ENCODE measurements at regions of chrX and their contacts with region 1.

Region 1: DNA sequence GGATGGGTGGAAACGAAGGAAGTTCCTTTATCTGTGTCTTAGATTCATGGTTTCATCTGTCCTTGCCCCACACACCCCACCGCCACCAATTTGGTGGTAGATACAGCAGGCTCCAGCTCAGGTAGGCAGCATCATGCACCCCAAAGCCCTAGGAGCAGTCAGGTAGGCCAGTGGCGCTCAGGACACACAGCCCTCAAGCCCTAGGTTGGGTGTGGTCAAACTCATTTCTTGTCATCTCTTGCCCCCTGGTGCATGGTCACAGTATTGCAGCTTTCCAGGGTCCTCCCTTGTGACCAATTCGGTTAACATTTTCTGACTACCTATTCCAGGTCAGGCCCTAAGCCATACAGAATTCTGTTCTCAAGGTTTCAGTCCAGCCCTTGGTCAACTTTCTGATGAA is 14.5 kb upstream of the PRRG3 start:
- DNase-seq: peak; percentile 62
- ATAC-seq: no peak
- H3K4me3 Mint-ChIP-seq: no peak overlapping the region
- H3K27ac Mint-ChIP-seq: no peak overlapping the region
- H3K4me1 Mint-ChIP-seq: peaks cover 8% of the 10 kb centered on the region
- H3K27me3 Mint-ChIP-seq: peaks cover 2% of the 10 kb centered on the region

Region 2: DNA sequence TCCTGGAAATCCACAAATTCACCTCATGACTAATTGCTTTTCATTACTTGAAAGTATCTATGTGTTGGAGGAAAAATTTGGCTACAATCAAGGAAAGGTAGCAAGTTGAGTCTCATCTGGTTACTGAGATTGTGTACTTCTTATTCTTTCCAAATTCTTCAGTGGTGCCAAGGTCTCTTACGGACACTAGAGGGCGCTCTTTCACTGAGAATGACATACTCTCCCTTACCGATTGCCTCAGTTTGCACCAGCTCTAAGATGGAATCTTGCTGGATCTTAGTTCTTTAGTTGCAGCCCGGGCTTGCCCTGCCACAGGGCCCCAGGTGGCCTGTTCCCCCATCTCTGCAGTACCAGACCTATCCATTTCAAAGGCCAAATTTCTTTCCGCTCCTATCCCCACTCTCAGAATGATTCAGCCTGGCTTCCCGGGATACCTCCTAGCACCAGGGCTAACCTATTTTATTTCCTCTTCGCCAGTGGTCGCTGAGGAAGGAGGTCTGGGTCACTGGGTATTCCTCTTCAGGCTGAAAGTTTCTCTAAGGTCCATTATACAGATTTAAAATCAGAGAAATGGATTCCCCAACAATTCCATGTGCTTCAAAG is 529.0 kb before region 1 on chrX:
- CTCF ChIA-PET with region 1: interaction called, 14 read pairs
- POLR2A ChIA-PET with region 1: no interaction called
- DNase-seq: peak; percentile 41
- ATAC-seq: peak; percentile 55
- H3K4me3 Mint-ChIP-seq: no peak overlapping the region
- H3K27ac Mint-ChIP-seq: no peak overlapping the region
- H3K4me1 Mint-ChIP-seq: no peaks in the 10 kb centered on the region
- H3K27me3 Mint-ChIP-seq: peaks cover 14% of the 10 kb centered on the region

Region 3: DNA sequence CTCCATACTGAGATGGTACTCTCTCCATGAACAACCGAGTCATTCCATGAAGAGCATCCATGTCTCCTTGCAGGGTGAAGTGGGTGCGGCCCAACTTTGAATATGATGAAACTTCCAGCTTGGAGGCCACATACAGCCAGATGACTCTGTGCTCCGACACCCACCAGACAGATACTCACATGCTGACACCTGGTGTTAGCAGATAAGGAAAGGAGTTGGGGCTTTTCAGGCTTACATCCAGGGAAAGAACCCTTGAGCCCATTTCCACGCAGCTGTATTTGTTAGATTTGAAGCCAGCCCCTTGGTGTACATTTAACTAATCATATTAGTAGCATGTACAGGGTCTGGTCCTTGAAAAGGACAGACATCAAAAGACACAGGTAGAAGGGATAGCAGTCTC is 47.6 kb before region 1 on chrX:
- CTCF ChIA-PET with region 1: no interaction called
- POLR2A ChIA-PET with region 1: no interaction called
- DNase-seq: no peak
- ATAC-seq: no peak
- H3K4me3 Mint-ChIP-seq: no peak overlapping the region
- H3K27ac Mint-ChIP-seq: no peak overlapping the region
- H3K4me1 Mint-ChIP-seq: no peaks in the 10 kb centered on the region
- H3K27me3 Mint-ChIP-seq: no peaks in the 10 kb centered on the region